ENCODE measurements at regions of chr6 and their contacts with region 1.

Region 1: GRCh38 chr6:147285087-147285855 is 81.1 kb downstream of the STXBP5 start:
- DNase-seq: peak in 4 of 5 donors; percentile 14 to 29 (median 24)
- H3K4me3 ChIP-seq: no peak overlapping the region
- H3K4me3 Mint-ChIP-seq: peak overlapping the region in 3 of 8 donors; percentile 6 to 27 (median 7)
- H3K27ac ChIP-seq: no peak overlapping the region
- H3K27ac Mint-ChIP-seq: peak overlapping the region in 2 of 7 donors; percentile 61 to 64
- H3K4me1 ChIP-seq: peaks cover 8% of the 10 kb centered on the region
- H3K4me1 Mint-ChIP-seq: peaks cover 12 to 28% (median 15%) of the 10 kb centered on the region in 4 donors
- H3K27me3 ChIP-seq: no peaks in the 10 kb centered on the region
- H3K27me3 Mint-ChIP-seq: no peaks in the 10 kb centered on the region

Region 2: GRCh38 chr6:146931208-146931607 is 354.1 kb before region 1 on chr6:
- CTCF ChIA-PET with region 1: interaction called, 7 read pairs
- POLR2A ChIA-PET with region 1: interaction called, 3 read pairs
- intact Hi-C with region 1: loop called (anchors 10 kb)
- DNase-seq: no peak
- H3K4me3 ChIP-seq: no peak overlapping the region
- H3K4me3 Mint-ChIP-seq: no peak overlapping the region
- H3K27ac ChIP-seq: no peak overlapping the region
- H3K27ac Mint-ChIP-seq: no peak overlapping the region
- H3K4me1 ChIP-seq: no peaks in the 10 kb centered on the region
- H3K4me1 Mint-ChIP-seq: no peaks in the 10 kb centered on the region
- H3K27me3 ChIP-seq: no peaks in the 10 kb centered on the region
- H3K27me3 Mint-ChIP-seq: peaks cover 0 to 3% of the 10 kb centered on the region in 2 donors

Measured in CD4-positive, alpha-beta memory T cell (primary cell).